ENCODE measurements at regions of chr17 and their contacts with region 1.

Region 1: DNA sequence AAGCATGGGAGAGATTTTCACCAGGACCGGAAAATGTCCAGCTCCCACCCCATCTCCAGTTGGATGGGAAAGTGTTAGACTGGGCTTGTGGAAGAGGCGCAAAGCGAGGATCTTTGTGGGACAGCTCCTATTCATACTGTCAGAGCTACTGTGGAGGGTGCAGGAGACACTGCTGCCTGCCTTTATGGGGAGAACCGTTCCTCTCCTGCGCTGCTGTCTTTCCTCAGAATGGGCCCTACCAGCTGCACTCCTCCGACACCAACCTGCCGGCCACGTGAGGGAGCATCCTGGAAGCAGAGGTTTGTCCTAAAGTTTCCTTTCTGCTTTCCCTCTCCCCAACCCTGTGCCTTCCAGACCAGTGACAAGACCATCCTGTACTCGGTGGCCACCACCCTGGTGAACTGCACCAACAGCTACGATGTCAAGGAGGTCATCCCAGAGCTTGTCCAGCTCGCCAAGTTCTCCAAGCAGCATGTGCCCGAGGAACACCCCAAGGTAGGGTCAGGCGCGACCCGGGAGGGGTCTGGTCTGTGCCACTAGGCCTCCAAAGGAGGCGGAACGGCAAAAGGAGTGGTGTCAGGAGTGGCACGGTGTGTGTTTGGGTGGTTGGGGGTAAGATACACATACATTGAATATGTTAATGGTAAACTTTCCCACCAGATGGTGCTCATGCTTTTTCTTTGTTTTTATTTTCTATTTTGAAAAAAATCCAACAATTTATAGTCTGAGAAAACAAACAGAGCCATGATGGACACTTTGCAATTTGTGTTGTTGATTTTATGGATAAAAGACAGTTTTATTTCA is 23.0 kb downstream of the SLC35G3 start:
- DNase-seq: peak in 1 of 2 donors; percentile 40
- H3K4me3 ChIP-seq: no peak overlapping the region
- H3K27ac ChIP-seq: no peak overlapping the region
- H3K4me1 ChIP-seq: no peaks in the 10 kb centered on the region
- H3K27me3 ChIP-seq: peaks cover 0 to 11% (median 0%) of the 10 kb centered on the region in 3 donors
- CTCF ChIP-seq: peak in 3 of 7 experiments; percentile 2 to 43 (median 36)
- EP300 ChIP-seq: no peak
- POLR2A ChIP-seq: no peak

Region 2: GRCh38 chr17:35529866-35530265 is 358.7 kb after region 1 on chr17:
- intact Hi-C with region 1: loop called (anchors 5 kb)
- DNase-seq: no peak
- H3K4me3 ChIP-seq: no peak overlapping the region
- H3K27ac ChIP-seq: no peak overlapping the region
- H3K4me1 ChIP-seq: peaks cover 0 to 9% (median 5%) of the 10 kb centered on the region in 4 donors
- H3K27me3 ChIP-seq: no peaks in the 10 kb centered on the region
- CTCF ChIP-seq: no peak
- EP300 ChIP-seq: no peak
- POLR2A ChIP-seq: no peak

Measured in stomach (tissue), 19 donors.